Activated CD4-positive, alpha-beta memory T cell treated with anti-CD3 and anti-CD28 coated beads, Interleukin-2, amount 10 ng/mL, durations not matched to agents 7 days and 5 days (primary cell): ENCODE measurements at regions of chr12 and their contacts with region 1.

Region 1: DNA sequence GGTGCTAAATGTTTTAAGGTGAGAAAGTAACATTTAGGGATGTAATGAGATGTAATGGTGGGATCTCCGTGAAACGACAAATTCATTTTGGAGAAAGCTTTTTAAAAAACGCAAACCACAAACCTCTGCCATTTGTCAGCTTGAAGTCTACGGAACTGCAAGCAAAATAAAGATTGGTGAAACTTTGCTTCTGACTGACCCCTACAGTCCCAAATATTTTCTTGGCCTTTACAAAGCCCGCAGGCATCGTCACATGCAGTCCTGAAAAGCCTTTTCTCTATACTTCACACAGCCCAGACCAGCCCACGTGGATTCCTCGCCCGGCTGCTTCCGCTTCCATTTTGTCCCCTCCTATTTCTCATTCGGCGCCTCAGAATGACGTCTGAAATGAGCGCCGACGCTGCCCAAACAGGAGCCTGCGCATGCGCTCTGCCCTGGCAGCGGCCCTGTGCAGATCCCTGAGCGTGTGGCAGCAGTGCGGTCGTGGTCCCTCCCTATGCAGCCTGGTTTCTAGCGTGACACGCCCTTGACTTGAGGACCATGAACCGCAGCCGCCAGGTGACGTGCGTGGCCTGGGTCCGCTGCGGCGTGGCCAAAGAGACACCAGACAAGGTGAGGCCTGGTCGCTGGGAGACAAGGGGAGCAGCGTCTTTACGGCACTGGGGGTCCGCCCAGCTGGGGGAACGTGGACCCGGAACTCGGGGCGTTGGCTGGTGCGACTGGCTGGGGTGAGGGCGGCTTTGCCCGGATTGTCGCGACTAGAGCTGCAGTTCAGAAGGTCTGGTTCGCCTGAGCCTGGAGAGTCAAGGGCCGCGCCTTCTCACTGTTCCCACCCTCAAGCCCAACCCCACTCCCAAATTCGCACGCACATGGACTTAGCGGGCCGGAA is at the start of gene PWP1:
- DNase-seq: peak; percentile 96
- H3K4me3 Mint-ChIP-seq: peak within 1 kb of the TSS; percentile 87
- H3K27ac Mint-ChIP-seq: peak within 1 kb of the TSS; percentile 95
- H3K4me1 Mint-ChIP-seq: peaks cover 29% of the 10 kb centered on the region
- H3K27me3 Mint-ChIP-seq: no peaks in the 10 kb centered on the region
- total RNA-seq, gene PWP1: 31.9 to 34.5 TPM

Region 2: GRCh38 chr12:107670999-107671643 is 14.5 kb before region 1 on chr12:
- CTCF ChIA-PET with region 1: interaction called, 14 read pairs
- POLR2A ChIA-PET with region 1: interaction called, 7 read pairs
- DNase-seq: peak; percentile 61
- H3K4me3 Mint-ChIP-seq: no peak overlapping the region
- H3K27ac Mint-ChIP-seq: no peak overlapping the region
- H3K4me1 Mint-ChIP-seq: peaks cover 9% of the 10 kb centered on the region
- H3K27me3 Mint-ChIP-seq: peaks cover 25% of the 10 kb centered on the region

Region 3: DNA sequence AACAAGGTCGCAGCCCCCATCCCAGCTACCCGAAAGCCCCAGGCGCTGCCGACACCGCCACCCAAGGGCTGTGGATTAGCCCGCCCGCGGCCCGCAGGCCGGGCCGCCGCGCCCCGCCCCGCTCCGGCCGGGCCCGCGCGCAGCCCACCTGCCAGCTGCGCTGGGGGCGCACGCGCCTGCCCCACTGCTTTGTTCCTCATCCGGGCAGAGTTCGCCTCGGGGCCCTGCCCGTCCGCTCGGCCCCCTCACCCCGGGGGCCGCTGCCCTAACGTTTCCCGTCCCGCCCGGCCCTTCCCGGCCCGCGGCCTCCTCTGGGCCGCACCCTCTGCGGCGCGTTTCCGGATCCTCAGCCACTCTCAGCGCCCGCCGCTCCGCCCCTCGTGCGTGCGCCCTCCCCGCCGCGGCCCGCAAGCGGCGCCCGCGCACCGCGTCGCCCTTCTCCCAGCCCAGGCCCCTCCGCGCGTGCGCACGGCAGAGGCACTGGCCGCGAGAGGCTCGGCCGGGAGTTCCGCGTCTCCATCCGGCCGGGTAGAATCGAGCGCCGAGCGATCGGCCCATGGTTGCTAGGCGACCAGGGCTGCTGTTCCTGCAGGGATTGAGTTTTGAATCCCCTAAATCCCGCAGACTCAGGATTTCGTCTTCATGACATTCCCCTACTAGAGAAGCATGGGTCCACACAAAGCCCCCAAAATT is 75.4 kb after region 1 on chr12 and contains the start of gene PRDM4:
- CTCF ChIA-PET with region 1: interaction called, 5 read pairs
- POLR2A ChIA-PET with region 1: interaction called, 36 read pairs
- DNase-seq: peak; percentile 93
- H3K4me3 Mint-ChIP-seq: peak within 1 kb of the TSS; percentile 89
- H3K27ac Mint-ChIP-seq: peak within 1 kb of the TSS; percentile 91
- H3K4me1 Mint-ChIP-seq: peaks cover 34% of the 10 kb centered on the region
- H3K27me3 Mint-ChIP-seq: peaks cover 4% of the 10 kb centered on the region
- total RNA-seq, gene PRDM4: 34.0 to 36.2 TPM

Region 4: GRCh38 chr12:107783406-107784376 is 98.1 kb after region 1 on chr12:
- CTCF ChIA-PET with region 1: no interaction called
- POLR2A ChIA-PET with region 1: no interaction called
- DNase-seq: no peak
- H3K4me3 Mint-ChIP-seq: no peak overlapping the region
- H3K27ac Mint-ChIP-seq: no peak overlapping the region
- H3K4me1 Mint-ChIP-seq: peaks cover 8% of the 10 kb centered on the region
- H3K27me3 Mint-ChIP-seq: peaks cover 27% of the 10 kb centered on the region